Motor neuron (in vitro differentiated cells): ENCODE measurements at regions of chr12 and their contacts with region 1.

Region 1: GRCh38 chr12:116703214-116703795 is 34.6 kb downstream of the SPRING1 start:
- ATAC-seq: peak; percentile 64 to 84 (median 72)
- H3K4me3 ChIP-seq: no peak overlapping the region
- H3K27ac ChIP-seq: no peak overlapping the region
- H3K4me1 ChIP-seq: peaks cover 5 to 6% of the 10 kb centered on the region in 2 donors

Region 2: GRCh38 chr12:115998119-115998633 is 705.1 kb before region 1 on chr12:
- in situ Hi-C with region 1: loop called in 2 of 9 experiments (anchors 25 kb)
- ATAC-seq: peak in 6 of 8 experiments; percentile 25 to 65 (median 40)
- H3K4me3 ChIP-seq: no peak overlapping the region
- H3K27ac ChIP-seq: no peak overlapping the region
- H3K4me1 ChIP-seq: no peaks in the 10 kb centered on the region

Region 3: GRCh38 chr12:116880817-116881324 is 177.6 kb after region 1 on chr12:
- in situ Hi-C with region 1: loop called in 4 of 9 experiments (anchors 10 to 25 kb)
- ATAC-seq: peak; percentile 54 to 88 (median 80)
- H3K4me3 ChIP-seq: peak overlapping the region; percentile 43 to 58 (median 58)
- H3K27ac ChIP-seq: peak overlapping the region in 1 of 2 donors; percentile 14
- H3K4me1 ChIP-seq: peaks cover 20 to 33% of the 10 kb centered on the region in 2 donors